ENCODE measurements at regions of chr3 and their contacts with region 1.

Region 1: DNA sequence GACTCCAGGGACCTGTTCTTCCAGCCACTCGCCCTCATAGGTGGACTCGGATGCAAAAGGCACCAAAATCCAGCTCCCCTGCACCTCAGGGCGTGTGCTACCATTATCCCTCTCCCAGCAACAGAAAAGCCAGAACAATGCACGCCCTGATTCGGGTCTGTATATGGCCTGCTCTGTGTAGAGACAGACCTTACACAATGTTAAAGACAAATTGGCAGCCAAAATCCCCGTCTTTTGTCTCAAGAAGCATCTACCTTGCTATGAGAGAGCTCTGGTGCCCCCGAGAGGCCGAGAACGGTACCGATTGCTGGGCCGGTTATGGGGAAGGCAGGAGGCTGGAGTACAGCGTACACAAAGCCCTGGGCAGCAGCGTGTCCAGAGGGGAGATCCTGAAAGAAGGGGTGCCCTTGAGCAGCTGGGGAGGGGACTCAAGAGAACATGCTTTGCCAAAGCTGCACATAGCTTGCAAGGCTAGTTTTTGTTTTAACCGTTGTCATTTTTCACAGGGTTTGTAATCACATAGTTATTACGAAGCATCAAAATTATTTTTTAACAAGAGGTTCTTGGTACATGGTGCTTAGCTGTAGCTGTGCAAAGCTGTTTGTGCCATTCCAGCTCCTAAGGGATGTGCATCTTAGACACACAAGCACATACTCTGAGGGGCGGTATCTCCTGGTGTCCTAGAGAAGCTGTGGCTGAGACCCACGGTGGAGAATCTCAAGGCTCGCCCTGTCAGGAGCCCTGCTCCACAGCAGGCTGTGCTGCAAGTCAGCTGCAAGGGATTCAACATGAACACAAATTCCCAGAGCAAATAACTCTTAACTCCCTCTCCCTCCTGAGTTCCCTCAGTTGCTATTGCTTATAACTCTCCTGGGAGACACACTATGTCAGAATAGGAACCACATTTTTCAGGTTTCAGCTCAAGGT is 461.5 kb upstream of the PPP2R3A start:
- DNase-seq: peak; percentile 83 to 88
- H3K4me3 ChIP-seq: no peak overlapping the region
- H3K27ac ChIP-seq: no peak overlapping the region
- H3K4me1 ChIP-seq: no peaks in the 10 kb centered on the region
- H3K27me3 ChIP-seq: no peaks in the 10 kb centered on the region
- CTCF ChIP-seq: peak; percentile 39 to 89 (median 75)
- POLR2A ChIP-seq: no peak

Region 2: GRCh38 chr3:134794950-134795745 is 708.9 kb before region 1 on chr3 and contains the start of gene EPHB1:
- intact Hi-C with region 1: loop called (anchors 2 kb)
- DNase-seq: peak; percentile 92 to 94
- H3K4me3 ChIP-seq: peak within 1 kb of the TSS; percentile 37 to 68 (median 38)
- H3K27ac ChIP-seq: no peak within 1 kb of the TSS
- H3K4me1 ChIP-seq: peaks cover 5 to 23% of the 10 kb centered on the region in 2 donors
- H3K27me3 ChIP-seq: no peaks in the 10 kb centered on the region
- CTCF ChIP-seq: peak; percentile 68 to 97 (median 94)
- POLR2A ChIP-seq: peak in 1 of 2 donors; percentile 91
- total RNA-seq, gene EPHB1: 2.3 to 5.6 (median 4.6) TPM

Region 3: DNA sequence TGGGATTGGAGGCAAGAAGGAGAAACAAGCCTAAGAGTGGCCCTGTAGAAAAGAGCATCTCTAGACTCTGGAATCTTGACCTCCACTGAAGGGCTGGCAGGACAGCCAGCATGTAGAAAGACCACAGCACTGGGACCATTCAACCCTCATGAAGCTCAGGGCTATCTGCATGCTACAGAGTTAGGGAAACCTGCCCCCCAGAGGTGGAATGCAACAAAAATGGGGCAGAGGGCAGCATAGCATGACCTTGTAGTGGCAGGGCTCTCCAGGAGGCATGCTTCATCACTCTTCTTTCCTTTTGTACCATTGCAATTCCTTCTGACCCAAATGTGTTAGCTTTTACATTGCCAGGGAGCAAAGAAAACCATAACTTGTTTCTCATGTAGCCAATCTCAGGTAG is 263.6 kb before region 1 on chr3:
- intact Hi-C with region 1: no loop called
- DNase-seq: peak; percentile 45 to 63
- H3K4me3 ChIP-seq: no peak overlapping the region
- H3K27ac ChIP-seq: no peak overlapping the region
- H3K4me1 ChIP-seq: peaks cover 7 to 9% of the 10 kb centered on the region in 2 donors
- H3K27me3 ChIP-seq: no peaks in the 10 kb centered on the region
- CTCF ChIP-seq: peak in 4 of 6 experiments; percentile 17 to 39 (median 25)
- POLR2A ChIP-seq: no peak

Region 4: DNA sequence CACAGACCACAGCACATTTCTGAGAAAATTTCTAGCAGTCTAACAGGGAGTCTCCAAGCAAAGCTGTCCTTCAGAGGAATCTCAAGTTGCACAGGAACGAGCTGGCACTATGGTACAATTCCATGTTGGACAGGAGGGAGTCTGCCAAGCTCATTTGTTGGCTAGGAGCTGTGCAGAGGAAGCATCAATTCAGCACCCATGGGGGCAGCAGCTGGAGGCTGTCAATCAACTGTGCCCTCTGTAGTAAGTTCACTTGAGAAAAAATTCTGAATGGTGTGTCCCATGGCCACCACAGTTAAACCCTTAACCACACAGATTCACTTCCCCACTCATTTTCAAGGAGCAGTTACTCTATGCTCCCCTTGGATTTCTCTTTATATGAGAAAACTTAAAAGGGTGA is 163.0 kb after region 1 on chr3:
- intact Hi-C with region 1: no loop called
- DNase-seq: no peak
- H3K4me3 ChIP-seq: no peak overlapping the region
- H3K27ac ChIP-seq: no peak overlapping the region
- H3K4me1 ChIP-seq: no peaks in the 10 kb centered on the region
- H3K27me3 ChIP-seq: no peaks in the 10 kb centered on the region
- CTCF ChIP-seq: no peak
- POLR2A ChIP-seq: no peak

Region 5: DNA sequence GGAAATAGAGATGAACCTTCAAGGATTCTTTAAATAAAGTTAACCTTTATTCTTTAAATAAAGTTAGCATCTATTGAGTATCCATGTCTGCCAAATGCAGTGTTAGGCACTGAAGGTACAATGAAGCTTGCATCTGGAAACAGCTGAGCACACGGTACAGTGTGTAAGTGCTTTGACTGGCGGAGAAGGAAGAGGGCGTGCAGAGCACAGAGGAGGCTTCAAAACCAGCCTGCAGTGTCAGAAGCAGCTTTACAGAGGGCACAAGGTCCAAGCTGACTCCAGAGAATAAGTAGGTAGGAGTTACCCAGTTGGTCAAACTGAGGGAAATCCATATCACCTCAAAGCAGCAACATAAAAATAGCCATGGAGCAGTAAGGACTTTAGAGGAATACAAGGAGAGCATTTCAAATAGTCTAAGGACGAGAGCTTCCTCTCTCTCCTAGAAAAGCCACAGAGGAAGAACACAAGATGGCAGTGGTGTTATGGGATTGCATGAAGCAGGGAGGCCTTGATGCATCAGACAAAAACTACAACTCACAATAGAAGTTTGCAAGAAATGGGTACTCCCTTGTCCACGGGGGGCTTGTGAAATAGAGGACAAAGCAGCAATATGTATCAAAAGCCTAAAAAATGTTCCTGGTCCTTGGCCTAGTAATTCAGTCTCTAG is 401.2 kb after region 1 on chr3:
- intact Hi-C with region 1: no loop called
- DNase-seq: no peak
- H3K4me3 ChIP-seq: no peak overlapping the region
- H3K27ac ChIP-seq: no peak overlapping the region
- H3K4me1 ChIP-seq: peaks cover 0 to 7% of the 10 kb centered on the region in 2 donors
- H3K27me3 ChIP-seq: no peaks in the 10 kb centered on the region
- CTCF ChIP-seq: no peak
- POLR2A ChIP-seq: no peak

Measured in thyroid gland (tissue), 4 donors.